Psoas muscle (tissue), 8 donors: ENCODE measurements at regions of chr17 and their contacts with region 1.

Region 1: GRCh38 chr17:13973960-13974651 is 95.2 kb upstream of the COX10 start:
- DNase-seq: no peak
- ATAC-seq: no peak
- H3K4me3 ChIP-seq: no peak overlapping the region
- H3K27ac ChIP-seq: no peak overlapping the region
- H3K4me1 ChIP-seq: no peaks in the 10 kb centered on the region
- H3K27me3 ChIP-seq: no peaks in the 10 kb centered on the region
- CTCF ChIP-seq: no peak

Region 2: DNA sequence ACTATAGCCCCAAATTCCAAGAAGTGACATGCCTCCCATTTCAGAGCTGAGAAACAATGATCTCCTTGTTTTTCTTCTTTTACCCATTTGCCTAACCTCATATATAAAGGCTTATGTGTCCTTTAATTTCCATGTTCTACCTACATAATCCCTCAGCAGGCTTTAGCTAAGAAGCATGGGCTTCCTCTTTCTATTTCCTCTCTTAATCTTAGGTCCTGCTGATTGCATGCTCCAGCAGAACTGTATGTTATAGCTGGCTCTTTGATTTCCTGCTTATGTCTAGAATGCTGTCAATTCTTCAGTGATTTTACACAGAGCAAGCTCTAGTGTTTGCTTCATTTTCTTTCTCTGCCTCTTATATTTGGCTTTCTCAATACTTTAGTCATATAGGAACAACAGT is 56.5 kb before region 1 on chr17:
- intact Hi-C with region 1: loop called in 1 of 2 experiments (anchors 10 kb)
- DNase-seq: no peak
- ATAC-seq: no peak
- H3K4me3 ChIP-seq: no peak overlapping the region
- H3K27ac ChIP-seq: no peak overlapping the region
- H3K4me1 ChIP-seq: no peaks in the 10 kb centered on the region
- H3K27me3 ChIP-seq: no peaks in the 10 kb centered on the region
- CTCF ChIP-seq: no peak